GM10248 (cell line): ENCODE measurements at regions of chr6 and their contacts with region 1.

Region 1: DNA sequence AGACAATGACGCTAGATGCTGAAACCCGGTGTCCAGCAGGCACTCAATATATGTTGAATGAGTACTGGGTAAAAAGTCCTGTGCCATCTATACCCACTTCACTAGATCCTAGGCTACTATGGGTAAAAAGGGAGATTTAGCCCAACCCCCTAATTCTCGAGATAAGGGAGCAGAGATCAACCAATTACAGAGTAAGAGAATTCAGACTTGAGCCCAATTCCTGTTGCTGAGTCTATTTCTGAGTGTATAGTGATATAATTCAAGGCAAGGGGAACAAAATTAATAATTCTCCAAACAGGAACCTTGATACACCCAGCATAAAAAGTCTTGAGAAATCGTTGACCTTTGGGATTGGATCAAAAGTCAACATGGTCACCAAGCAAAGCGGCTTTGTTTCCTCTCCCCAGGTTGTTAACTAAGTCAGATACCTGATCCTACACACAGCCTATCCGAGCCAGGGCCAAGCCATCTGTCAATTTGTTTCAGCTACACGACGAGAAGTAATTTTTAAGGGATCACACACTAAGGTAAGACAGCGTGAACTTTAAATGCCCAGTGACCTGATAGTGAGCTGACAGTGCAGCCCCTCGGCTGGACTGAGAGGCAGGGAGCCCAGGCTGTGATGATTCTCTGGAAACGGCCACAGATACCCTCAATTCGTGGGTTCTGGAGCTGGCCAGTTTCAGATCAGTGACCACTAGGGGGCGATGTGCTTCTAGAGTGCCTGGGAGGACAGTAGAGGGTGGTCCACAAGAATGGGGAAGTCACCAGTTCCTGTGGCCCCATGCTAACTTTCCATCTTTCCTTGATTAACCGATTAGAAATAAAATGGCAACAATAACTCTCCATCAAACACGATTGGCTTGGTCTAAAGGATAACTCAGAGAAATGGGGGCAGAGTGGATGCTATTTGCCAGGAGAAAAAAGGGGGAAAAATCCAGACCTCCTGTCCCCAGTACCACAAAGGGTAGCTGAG is 46.2 kb downstream of the SLC22A23 start:
- DNase-seq: peak; percentile 67
- CTCF ChIP-seq: peak; percentile 49

Region 2: GRCh38 chr6:3258720-3259490 is 151.8 kb before region 1 on chr6 and contains the start of gene PSMG4:
- CTCF ChIA-PET with region 1: no interaction called
- POLR2A ChIA-PET with region 1: no interaction called
- DNase-seq: peak; percentile 99
- CTCF ChIP-seq: no peak

Region 3: GRCh38 chr6:3377536-3378397 is 32.9 kb before region 1 on chr6:
- CTCF ChIA-PET with region 1: interaction called, 11 read pairs
- POLR2A ChIA-PET with region 1: no interaction called
- DNase-seq: no peak
- CTCF ChIP-seq: no peak